ENCODE measurements at regions of chr2 and their contacts with region 1.

Region 1: DNA sequence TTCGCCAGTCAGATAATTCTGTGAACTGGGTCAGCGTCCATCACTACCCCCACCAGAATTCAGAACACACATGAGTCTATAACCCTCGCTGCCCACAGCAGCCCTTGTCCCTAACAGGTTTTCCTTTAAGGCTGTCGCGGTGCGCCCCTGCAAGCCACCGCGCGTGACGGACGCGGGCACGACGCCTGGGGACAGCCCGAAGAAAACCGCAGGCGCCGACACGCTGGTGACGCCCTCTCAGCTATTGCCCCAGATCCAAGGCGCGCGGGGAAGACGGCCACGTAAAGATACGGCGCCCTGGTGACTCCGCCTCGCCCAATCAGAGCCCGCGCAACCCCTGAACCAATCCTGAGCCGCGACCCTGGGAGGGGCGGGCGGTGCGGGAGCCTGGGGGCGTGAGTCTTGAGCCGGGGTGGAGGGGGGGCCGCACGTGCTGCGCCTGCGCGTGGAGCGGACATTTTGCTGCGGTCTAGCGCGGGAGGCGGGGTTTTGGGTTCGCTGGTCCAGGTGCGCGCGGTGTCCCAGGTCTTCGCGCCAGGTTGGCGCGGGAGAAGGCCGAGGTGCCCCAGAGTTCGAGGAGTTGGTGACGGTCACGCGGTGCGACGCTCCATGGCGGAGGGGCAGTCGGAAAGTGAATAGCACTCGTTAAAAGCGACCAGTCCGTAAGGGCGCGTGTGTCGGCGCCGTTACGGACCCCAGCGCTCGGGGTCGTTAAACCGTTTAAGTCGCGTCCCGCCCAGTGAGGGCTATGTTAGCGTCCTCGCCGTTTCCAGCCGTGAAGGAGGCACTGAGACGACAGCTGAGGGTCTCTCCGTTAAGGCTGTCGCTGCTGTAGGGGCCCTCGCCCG is 15.9 kb downstream of the NMUR1 start:
- DNase-seq: peak; percentile 99
- ATAC-seq: peak; percentile 98
- H3K4me3 ChIP-seq: peak overlapping the region; percentile 62 to 83 (median 75)
- H3K4me3 Mint-ChIP-seq: peak overlapping the region; percentile 94
- H3K27ac ChIP-seq: peak overlapping the region; percentile 92 to 93
- H3K27ac Mint-ChIP-seq: peak overlapping the region; percentile 98
- H3K4me1 ChIP-seq: peaks cover 11 to 13% of the 10 kb centered on the region in 2 donors
- H3K4me1 Mint-ChIP-seq: peaks cover 16% of the 10 kb centered on the region
- H3K27me3 ChIP-seq: no peaks in the 10 kb centered on the region
- H3K27me3 Mint-ChIP-seq: no peaks in the 10 kb centered on the region
- CTCF ChIP-seq: no peak

Region 2: DNA sequence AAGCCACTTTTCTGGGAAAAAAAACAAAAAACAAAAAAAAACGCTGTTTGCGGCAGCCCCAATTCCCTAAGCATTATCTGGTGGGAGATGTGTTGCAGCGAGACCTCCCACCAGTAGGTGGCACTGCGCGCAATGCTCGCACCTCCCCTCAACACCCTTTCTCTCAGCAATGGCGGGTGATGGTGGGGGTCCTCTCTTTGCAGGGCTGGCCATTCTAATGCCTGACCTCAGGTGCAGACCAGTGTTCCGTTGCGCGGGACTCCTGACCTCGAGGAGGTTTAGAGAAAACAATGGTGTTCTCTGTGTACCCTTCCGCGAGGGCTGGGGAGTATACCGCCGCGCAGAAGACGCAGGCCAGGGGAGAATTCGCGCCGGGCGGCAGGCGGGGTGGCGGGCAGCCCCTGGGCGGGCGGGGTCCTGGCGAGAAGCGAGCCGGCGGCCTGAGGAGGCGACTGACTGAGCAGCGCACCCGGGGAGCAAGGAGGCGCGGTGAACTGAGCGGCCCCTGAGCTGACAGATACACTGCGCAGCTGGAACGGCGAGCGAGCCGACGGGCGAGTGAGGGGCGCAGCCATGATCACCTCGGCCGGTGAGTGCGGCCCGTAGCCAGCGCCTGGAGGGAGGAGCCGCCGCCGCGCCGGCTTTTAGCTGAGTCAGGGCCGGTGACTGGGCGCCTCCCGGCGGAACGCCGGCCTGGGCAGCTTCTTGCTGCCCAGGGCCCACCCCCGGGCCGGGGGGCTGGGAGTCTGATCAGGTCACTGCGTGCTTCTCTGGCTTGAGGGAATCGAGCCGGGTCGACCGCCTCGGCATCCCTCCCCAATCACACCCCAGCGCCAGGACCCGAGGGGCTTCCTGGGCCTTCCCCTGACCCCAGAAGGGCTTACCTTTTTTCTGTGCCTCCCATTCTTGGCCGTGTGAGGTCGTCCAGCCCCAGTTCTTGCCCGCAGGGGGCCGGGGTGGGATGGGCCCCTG is 457.6 kb before region 1 on chr2 and contains the start of gene PSMD1:
- CTCF ChIA-PET with region 1: no interaction called
- POLR2A ChIA-PET with region 1: no interaction called
- intact Hi-C with region 1: loop called (anchors 2 kb)
- DNase-seq: peak; percentile 98
- ATAC-seq: peak; percentile 87
- H3K4me3 ChIP-seq: peak within 1 kb of the TSS; percentile 75 to 99 (median 90)
- H3K4me3 Mint-ChIP-seq: peak within 1 kb of the TSS; percentile 100
- H3K27ac ChIP-seq: peak within 1 kb of the TSS; percentile 85 to 86
- H3K27ac Mint-ChIP-seq: peak within 1 kb of the TSS; percentile 100
- H3K4me1 ChIP-seq: peaks cover 22 to 27% of the 10 kb centered on the region in 2 donors
- H3K4me1 Mint-ChIP-seq: peaks cover 39% of the 10 kb centered on the region
- H3K27me3 ChIP-seq: peaks cover 0 to 6% (median 0%) of the 10 kb centered on the region in 4 experiments
- H3K27me3 Mint-ChIP-seq: peaks cover 16% of the 10 kb centered on the region
- CTCF ChIP-seq: peak; percentile 91
- total RNA-seq, gene PSMD1: 45.4 and 48.2 TPM in 2 replicates

Region 3: DNA sequence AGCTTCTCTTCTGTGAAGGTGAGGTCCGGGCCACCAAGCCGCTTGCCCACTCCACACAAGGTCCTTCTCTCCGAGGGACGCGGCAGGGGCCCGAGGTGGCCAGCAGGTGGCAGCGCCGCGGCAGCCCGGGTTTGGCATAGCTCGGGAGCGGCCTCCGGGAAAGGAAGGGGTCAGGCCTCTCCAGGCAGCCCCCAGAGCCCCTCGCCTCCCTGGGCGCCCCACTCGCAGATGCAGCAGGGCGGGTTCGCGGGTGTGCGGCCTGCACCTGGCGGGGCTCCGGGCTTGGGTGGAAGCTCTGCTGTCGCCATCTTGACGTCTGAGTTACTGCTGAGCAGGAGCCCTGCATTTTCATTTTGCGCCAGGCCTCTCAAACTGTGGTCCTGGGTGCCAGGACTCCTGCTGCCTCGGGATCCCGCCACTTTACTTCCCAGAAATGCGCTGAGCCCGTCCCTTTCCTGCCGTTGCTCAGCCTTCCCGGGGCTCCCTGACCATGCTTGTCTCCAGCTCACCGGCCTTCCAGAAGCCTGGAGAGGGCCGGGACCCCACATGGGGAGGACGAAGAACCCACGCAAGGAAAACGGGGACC is 31.4 kb before region 1 on chr2:
- CTCF ChIA-PET with region 1: interaction called, 24 read pairs
- POLR2A ChIA-PET with region 1: no interaction called
- intact Hi-C with region 1: loop called (anchors 1 kb)
- DNase-seq: peak; percentile 82
- ATAC-seq: peak; percentile 85
- H3K4me3 ChIP-seq: peak overlapping the region in 4 of 5 experiments; percentile 58 to 65 (median 59)
- H3K4me3 Mint-ChIP-seq: peak overlapping the region; percentile 83
- H3K27ac ChIP-seq: peak overlapping the region; percentile 71 to 75
- H3K27ac Mint-ChIP-seq: peak overlapping the region; percentile 86
- H3K4me1 ChIP-seq: peaks cover 0 to 19% of the 10 kb centered on the region in 2 donors
- H3K4me1 Mint-ChIP-seq: peaks cover 7% of the 10 kb centered on the region
- H3K27me3 ChIP-seq: no peaks in the 10 kb centered on the region
- H3K27me3 Mint-ChIP-seq: no peaks in the 10 kb centered on the region
- CTCF ChIP-seq: peak; percentile 91

Region 4: DNA sequence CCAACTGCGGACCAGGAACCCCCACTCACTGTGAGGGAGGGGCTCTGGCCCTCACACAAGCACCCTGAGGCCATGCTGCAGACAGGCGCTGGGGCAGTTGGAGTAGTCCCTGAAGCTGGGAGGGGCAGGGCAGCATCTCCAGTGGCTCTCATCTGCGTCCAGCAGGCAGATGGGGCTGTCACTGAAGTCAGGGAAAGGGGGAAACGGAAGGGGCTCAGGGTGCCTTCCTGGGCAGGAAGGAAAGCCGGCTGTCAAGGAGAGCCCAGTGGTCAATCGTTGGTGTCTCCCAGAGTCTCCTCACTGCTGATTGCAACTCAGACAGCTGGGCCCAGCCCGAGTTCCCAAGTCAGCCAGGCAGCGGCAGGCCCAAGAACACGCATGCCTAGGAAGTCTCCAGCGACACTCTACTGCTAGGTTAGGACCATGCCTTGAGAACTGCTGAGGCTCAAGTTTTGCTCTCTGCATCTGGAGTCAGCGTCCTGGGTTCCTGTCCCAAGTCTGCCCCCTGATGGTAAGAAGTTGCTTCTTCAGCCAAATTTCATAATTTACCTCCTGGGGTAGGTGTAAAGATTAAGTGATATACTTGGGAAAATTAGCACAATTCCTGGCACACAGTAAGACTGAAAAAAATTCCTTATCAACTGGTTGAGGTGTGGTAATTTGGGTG is 43.4 kb after region 1 on chr2:
- CTCF ChIA-PET with region 1: interaction called, 13 read pairs
- POLR2A ChIA-PET with region 1: interaction called, 3 read pairs
- intact Hi-C with region 1: loop called (anchors 1 kb)
- DNase-seq: peak; percentile 85
- ATAC-seq: peak; percentile 88
- H3K4me3 ChIP-seq: no peak overlapping the region
- H3K4me3 Mint-ChIP-seq: no peak overlapping the region
- H3K27ac ChIP-seq: no peak overlapping the region
- H3K27ac Mint-ChIP-seq: no peak overlapping the region
- H3K4me1 ChIP-seq: peaks cover 26 to 28% of the 10 kb centered on the region in 2 donors
- H3K4me1 Mint-ChIP-seq: peaks cover 23% of the 10 kb centered on the region
- H3K27me3 ChIP-seq: no peaks in the 10 kb centered on the region
- H3K27me3 Mint-ChIP-seq: no peaks in the 10 kb centered on the region
- CTCF ChIP-seq: peak; percentile 82

Region 5: GRCh38 chr2:231780909-231781797 is 266.8 kb after region 1 on chr2 and contains the start of gene PDE6D:
- CTCF ChIA-PET with region 1: interaction called, 3 read pairs
- POLR2A ChIA-PET with region 1: interaction called, 3 read pairs
- intact Hi-C with region 1: loop called (anchors 1 kb)
- DNase-seq: peak; percentile 98
- ATAC-seq: peak; percentile 89
- H3K4me3 ChIP-seq: peak within 1 kb of the TSS; percentile 72 to 92 (median 85)
- H3K4me3 Mint-ChIP-seq: peak within 1 kb of the TSS; percentile 100
- H3K27ac ChIP-seq: peak within 1 kb of the TSS; percentile 63 to 87
- H3K27ac Mint-ChIP-seq: peak within 1 kb of the TSS; percentile 97
- H3K4me1 ChIP-seq: peaks cover 28 to 32% of the 10 kb centered on the region in 2 donors
- H3K4me1 Mint-ChIP-seq: peaks cover 63% of the 10 kb centered on the region
- H3K27me3 ChIP-seq: no peaks in the 10 kb centered on the region
- H3K27me3 Mint-ChIP-seq: no peaks in the 10 kb centered on the region
- CTCF ChIP-seq: no peak
- total RNA-seq, gene PDE6D: 31.9 and 40.8 TPM in 2 replicates

Region 6: GRCh38 chr2:232038251-232038880 is 524.0 kb after region 1 on chr2:
- CTCF ChIA-PET with region 1: no interaction called
- POLR2A ChIA-PET with region 1: no interaction called
- intact Hi-C with region 1: no loop called
- DNase-seq: no peak
- ATAC-seq: no peak
- H3K4me3 ChIP-seq: no peak overlapping the region
- H3K4me3 Mint-ChIP-seq: no peak overlapping the region
- H3K27ac ChIP-seq: no peak overlapping the region
- H3K27ac Mint-ChIP-seq: no peak overlapping the region
- H3K4me1 ChIP-seq: no peaks in the 10 kb centered on the region
- H3K4me1 Mint-ChIP-seq: no peaks in the 10 kb centered on the region
- H3K27me3 ChIP-seq: no peaks in the 10 kb centered on the region
- H3K27me3 Mint-ChIP-seq: no peaks in the 10 kb centered on the region
- CTCF ChIP-seq: no peak

Measured in B cell (primary cell).